Stomach (tissue), 19 donors: ENCODE measurements at regions of chr4 and their contacts with region 1.

Region 1: DNA sequence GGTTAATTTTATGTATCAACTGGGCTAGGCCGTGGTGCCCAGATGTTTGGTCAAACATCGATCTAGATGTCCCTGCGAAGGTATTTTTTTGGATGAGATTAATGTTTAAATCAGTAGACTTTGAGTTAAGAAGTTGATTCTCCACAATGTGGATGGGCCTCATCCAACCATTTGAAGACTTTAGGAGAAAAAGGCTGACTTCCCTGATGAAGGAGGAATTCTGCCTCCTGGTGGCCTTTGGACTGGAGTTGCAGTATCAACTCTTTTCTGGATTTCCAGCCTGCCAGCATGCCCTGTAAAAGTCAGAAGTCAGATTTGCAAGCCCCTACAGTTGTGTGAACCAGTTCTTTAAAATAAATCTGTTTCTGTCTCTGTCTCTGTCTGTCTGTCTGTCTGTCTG is 91.4 kb downstream of the STK32B start:
- DNase-seq: peak; percentile 61 to 66
- H3K4me3 ChIP-seq: no peak overlapping the region
- H3K27ac ChIP-seq: no peak overlapping the region
- H3K4me1 ChIP-seq: peaks cover 0 to 16% (median 9%) of the 10 kb centered on the region in 4 donors
- H3K27me3 ChIP-seq: no peaks in the 10 kb centered on the region
- CTCF ChIP-seq: peak in 5 of 7 experiments; percentile 40 to 70 (median 44)
- EP300 ChIP-seq: no peak
- POLR2A ChIP-seq: no peak

Region 2: DNA sequence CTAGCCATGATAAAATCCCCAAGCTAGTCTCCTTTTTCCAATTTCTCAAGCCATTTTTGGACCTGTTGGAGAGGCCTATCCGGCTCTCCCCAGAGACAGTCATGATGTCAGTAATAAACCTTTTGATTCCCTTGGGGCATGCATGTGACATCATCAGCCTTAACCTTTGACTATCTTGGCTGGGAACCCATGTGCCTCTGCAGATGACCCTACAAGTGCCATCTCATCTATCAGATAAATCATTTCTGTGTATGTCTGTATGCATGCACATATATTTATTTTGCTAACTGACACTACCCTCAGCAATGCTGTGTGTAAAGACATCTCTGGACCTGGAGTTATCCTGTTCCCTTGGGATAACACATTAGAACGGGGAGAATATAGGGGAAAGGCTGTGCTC is 174.5 kb before region 1 on chr4:
- intact Hi-C with region 1: no loop called
- DNase-seq: no peak
- H3K4me3 ChIP-seq: no peak overlapping the region
- H3K27ac ChIP-seq: no peak overlapping the region
- H3K4me1 ChIP-seq: no peaks in the 10 kb centered on the region
- H3K27me3 ChIP-seq: no peaks in the 10 kb centered on the region
- CTCF ChIP-seq: no peak
- EP300 ChIP-seq: no peak
- POLR2A ChIP-seq: no peak

Region 3: GRCh38 chr4:4995103-4995907 is 147.4 kb before region 1 on chr4:
- intact Hi-C with region 1: loop called (anchors 5 kb)
- DNase-seq: peak; percentile 78 to 86
- H3K4me3 ChIP-seq: no peak overlapping the region
- H3K27ac ChIP-seq: peak overlapping the region in 1 of 5 donors; percentile 4
- H3K4me1 ChIP-seq: peaks cover 8 to 43% (median 29%) of the 10 kb centered on the region in 4 donors
- H3K27me3 ChIP-seq: peaks cover 0 to 9% (median 6%) of the 10 kb centered on the region in 3 donors
- CTCF ChIP-seq: peak in 6 of 7 experiments; percentile 43 to 86 (median 77)
- EP300 ChIP-seq: no peak
- POLR2A ChIP-seq: no peak

Region 4: GRCh38 chr4:5050520-5051277 is 92.0 kb before region 1 on chr4:
- intact Hi-C with region 1: loop called (anchors 5 kb)
- DNase-seq: peak; percentile 77 to 90
- H3K4me3 ChIP-seq: peak overlapping the region; percentile 54 to 70 (median 61)
- H3K27ac ChIP-seq: peak overlapping the region in 4 of 5 donors; percentile 43 to 75 (median 59)
- H3K4me1 ChIP-seq: peaks cover 15 to 27% (median 24%) of the 10 kb centered on the region in 4 donors
- H3K27me3 ChIP-seq: peaks cover 0 to 29% (median 13%) of the 10 kb centered on the region in 3 donors
- CTCF ChIP-seq: peak in 5 of 7 experiments; percentile 51 to 74 (median 57)
- EP300 ChIP-seq: no peak
- POLR2A ChIP-seq: no peak

Region 5: DNA sequence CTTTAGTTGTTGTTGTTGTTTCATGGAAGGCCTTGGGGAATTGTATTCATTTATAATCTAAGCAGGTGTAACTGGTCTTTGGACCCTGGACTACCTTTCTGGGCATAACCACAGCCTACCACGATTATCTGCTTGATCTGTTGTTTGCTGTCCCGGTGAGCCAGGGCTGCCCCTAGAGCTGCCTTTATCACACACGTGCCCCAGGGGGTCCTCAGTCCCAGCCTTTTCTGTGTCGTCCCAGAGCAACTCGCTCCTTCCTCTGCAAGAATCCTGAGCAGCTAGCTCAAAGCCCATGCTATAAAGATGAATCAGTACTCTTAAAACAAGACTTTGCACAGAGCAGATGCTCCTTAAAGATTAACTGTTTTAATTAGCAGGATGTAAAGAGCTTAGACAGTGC is 292.5 kb after region 1 on chr4:
- intact Hi-C with region 1: no loop called
- DNase-seq: no peak
- H3K4me3 ChIP-seq: no peak overlapping the region
- H3K27ac ChIP-seq: no peak overlapping the region
- H3K4me1 ChIP-seq: no peaks in the 10 kb centered on the region
- H3K27me3 ChIP-seq: no peaks in the 10 kb centered on the region
- CTCF ChIP-seq: no peak
- EP300 ChIP-seq: no peak
- POLR2A ChIP-seq: no peak